ENCODE measurements at regions of chrX and their contacts with region 1.

Region 1: DNA sequence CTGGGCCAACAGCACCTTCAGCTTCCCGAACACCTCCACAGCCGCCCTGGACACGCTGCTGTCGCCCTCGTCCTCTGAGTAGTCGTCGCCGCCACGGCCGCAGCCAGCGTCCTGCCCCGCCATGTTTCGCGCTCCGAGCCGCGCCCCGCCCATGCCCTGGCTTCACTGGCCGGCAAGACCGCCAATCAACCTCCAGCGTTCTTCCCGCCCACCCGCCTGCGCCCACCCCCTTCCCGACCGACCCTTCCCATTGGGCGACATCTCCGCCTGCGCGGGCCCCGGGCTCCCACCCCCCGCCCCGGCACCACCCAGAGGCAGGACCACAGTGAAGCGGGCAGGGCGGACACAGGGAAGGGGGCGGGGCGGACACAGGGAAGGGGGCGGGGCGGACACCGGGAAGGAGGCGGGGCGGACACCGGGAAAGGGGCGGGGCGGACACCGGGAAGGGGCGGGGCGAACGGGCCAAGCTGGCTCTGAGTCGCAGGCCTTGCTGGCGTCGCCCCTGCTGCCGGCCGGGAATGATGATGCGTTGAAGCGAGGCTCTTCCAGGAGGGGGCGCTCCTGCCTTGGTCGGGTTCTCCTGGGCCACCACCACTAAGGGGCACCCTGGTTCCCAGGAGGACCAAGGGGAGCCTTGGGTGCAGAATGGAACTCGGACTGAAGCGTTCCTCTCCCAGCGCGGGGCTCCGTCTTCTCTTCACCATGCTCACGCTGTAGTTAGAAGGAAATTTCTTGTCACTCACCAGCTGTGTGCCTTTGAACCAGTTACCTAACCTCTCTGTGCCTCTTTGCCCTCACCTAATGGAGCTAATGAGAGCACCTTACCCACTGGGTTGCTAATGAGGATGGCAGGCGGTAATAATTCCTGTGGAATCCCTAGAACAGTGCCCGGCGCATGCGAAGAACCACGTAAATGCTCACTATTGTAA is at the start of gene HAUS7:
- DNase-seq: peak; percentile 81
- H3K4me3 Mint-ChIP-seq: peak within 1 kb of the TSS; percentile 85
- H3K27ac Mint-ChIP-seq: peak within 1 kb of the TSS; percentile 80
- H3K4me1 Mint-ChIP-seq: no peaks in the 10 kb centered on the region
- H3K27me3 Mint-ChIP-seq: peaks cover 2% of the 10 kb centered on the region
- total RNA-seq, gene HAUS7: 62.7 and 68.2 TPM in 2 replicates

Region 2: GRCh38 chrX:153102436-153102835 is 368.3 kb before region 1 on chrX:
- intact Hi-C with region 1: no loop called
- DNase-seq: no peak
- H3K4me3 Mint-ChIP-seq: no peak overlapping the region
- H3K27ac Mint-ChIP-seq: no peak overlapping the region
- H3K4me1 Mint-ChIP-seq: peaks cover 8% of the 10 kb centered on the region
- H3K27me3 Mint-ChIP-seq: no peaks in the 10 kb centered on the region

Region 3: GRCh38 chrX:153333768-153334645 is 136.7 kb before region 1 on chrX and contains the start of gene ZNF275:
- intact Hi-C with region 1: loop called (anchors 2 kb)
- DNase-seq: peak; percentile 78
- H3K4me3 Mint-ChIP-seq: peak within 1 kb of the TSS; percentile 86
- H3K27ac Mint-ChIP-seq: peak within 1 kb of the TSS; percentile 90
- H3K4me1 Mint-ChIP-seq: peaks cover 49% of the 10 kb centered on the region
- H3K27me3 Mint-ChIP-seq: peaks cover 4% of the 10 kb centered on the region
- total RNA-seq, gene ZNF275: 22.1 and 22.5 TPM in 2 replicates

Region 4: DNA sequence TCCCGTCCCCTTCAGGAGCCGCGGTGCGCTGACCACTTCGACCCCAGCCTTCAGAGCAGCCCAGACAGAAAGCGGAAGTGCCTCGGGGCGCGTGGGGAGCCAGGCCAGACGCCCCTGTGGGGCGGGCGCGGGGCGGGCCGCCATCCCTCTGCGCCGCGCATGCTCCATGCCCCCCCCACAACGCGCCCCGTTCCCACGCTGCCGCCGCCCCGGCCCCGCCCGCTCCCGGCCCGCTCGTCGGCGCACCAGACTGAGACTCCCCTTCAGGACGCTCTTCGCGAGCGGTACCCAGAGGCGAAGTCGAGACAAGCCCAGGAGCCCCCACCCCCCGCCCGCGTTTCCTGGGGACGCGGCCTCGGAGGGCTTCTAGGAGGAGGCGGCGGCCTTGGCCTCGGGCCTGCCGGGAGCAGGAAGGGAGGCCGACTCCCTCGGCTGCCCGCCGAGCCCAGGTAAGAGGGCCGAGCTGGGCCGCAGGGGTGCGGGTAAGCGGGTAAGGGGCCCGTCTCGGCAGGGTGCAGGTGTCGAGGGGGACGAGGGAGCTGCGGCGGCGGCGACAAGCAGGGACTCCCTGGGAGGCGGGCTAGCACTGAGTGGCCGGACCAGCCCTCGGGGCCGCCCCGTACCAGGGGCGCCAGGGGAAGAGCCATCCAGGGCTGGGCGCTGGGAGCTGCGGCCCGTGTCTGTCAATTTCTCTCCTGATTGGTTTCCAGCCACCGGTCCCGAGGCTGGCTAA is 59.3 kb before region 1 on chrX and contains the start of gene ZFP92:
- intact Hi-C with region 1: loop called (anchors 2 kb)
- DNase-seq: peak; percentile 22
- H3K4me3 Mint-ChIP-seq: peak within 1 kb of the TSS; percentile 77
- H3K27ac Mint-ChIP-seq: peak within 1 kb of the TSS; percentile 44
- H3K4me1 Mint-ChIP-seq: no peaks in the 10 kb centered on the region
- H3K27me3 Mint-ChIP-seq: peaks cover 4% of the 10 kb centered on the region
- total RNA-seq, gene ZFP92: 2.4 and 2.5 TPM in 2 replicates

Region 5: DNA sequence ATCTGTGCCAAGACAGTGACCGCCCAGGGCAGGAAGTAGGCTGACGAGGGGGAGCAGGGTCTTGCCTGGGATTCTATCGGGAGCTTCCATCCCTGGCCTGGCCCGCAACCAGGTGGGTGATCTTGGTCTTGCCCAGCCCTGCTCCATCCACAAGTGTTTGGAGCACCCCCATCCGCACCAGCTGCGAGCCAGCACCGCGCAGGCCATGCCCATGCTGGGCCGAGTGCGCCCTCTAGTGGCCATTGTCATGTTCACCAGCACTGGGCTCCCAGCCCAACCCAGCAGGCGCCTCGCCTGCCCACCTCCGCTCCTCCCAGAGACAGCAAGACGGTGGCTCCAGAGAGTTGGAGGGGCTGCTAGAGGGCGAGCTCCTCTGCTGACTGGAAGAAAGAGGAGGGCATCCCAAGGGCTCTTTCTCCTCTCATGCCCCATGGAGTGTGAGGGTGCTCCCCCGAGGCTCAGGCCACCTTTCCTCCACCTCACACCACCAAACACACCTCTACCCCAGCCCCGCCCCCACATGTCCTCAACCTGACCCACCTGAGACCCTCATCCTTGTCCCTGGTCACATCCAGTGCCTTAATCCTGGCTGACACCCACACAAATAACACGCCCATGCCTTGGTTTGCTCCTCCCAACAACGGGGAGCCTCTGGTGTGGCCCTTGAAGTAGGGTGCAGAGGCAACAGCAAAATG is 36.9 kb after region 1 on chrX:
- intact Hi-C with region 1: loop called (anchors 1 kb)
- DNase-seq: peak; percentile 70
- H3K4me3 Mint-ChIP-seq: no peak overlapping the region
- H3K27ac Mint-ChIP-seq: no peak overlapping the region
- H3K4me1 Mint-ChIP-seq: no peaks in the 10 kb centered on the region
- H3K27me3 Mint-ChIP-seq: no peaks in the 10 kb centered on the region

Region 6: GRCh38 chrX:153521034-153521433 is 50.3 kb after region 1 on chrX:
- intact Hi-C with region 1: no loop called
- DNase-seq: no peak
- H3K4me3 Mint-ChIP-seq: no peak overlapping the region
- H3K27ac Mint-ChIP-seq: no peak overlapping the region
- H3K4me1 Mint-ChIP-seq: no peaks in the 10 kb centered on the region
- H3K27me3 Mint-ChIP-seq: peaks cover 2% of the 10 kb centered on the region

Region 7: GRCh38 chrX:153539171-153539978 is 68.7 kb after region 1 on chrX:
- intact Hi-C with region 1: no loop called
- DNase-seq: peak; percentile 29
- H3K4me3 Mint-ChIP-seq: no peak overlapping the region
- H3K27ac Mint-ChIP-seq: no peak overlapping the region
- H3K4me1 Mint-ChIP-seq: no peaks in the 10 kb centered on the region
- H3K27me3 Mint-ChIP-seq: no peaks in the 10 kb centered on the region

Region 8: GRCh38 chrX:153599192-153600031 is 128.7 kb after region 1 on chrX:
- intact Hi-C with region 1: loop called (anchors 2 kb)
- DNase-seq: peak; percentile 87
- H3K4me3 Mint-ChIP-seq: peak overlapping the region; percentile 89
- H3K27ac Mint-ChIP-seq: peak overlapping the region; percentile 59
- H3K4me1 Mint-ChIP-seq: peaks cover 30% of the 10 kb centered on the region
- H3K27me3 Mint-ChIP-seq: peaks cover 1% of the 10 kb centered on the region